Breast epithelium (tissue), 4 donors: ENCODE measurements at regions of chr4 and their contacts with region 1.

Region 1: DNA sequence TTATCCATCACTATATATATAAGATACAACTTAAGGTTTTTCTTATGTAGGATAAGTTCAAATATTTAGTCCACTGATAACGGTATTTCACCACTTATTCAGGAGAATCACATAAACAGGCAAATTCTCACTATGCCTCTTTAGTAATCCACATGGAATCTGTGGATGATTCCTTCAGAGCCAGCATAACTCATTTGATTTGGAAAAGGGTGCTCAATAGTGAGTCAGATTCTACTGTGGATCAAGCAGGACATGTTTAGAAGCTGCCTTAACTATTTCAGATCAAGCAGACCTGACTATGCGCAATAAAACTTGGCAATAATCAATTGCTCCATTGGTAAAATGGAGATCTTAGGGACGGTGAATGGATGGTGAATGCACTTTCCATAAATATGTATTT is 184.1 kb downstream of the CBR4 start:
- DNase-seq: no peak
- H3K4me3 ChIP-seq: no peak overlapping the region
- H3K27ac ChIP-seq: no peak overlapping the region
- H3K4me1 ChIP-seq: no peaks in the 10 kb centered on the region
- H3K27me3 ChIP-seq: no peaks in the 10 kb centered on the region
- CTCF ChIP-seq: no peak
- POLR2A ChIP-seq: no peak

Region 2: DNA sequence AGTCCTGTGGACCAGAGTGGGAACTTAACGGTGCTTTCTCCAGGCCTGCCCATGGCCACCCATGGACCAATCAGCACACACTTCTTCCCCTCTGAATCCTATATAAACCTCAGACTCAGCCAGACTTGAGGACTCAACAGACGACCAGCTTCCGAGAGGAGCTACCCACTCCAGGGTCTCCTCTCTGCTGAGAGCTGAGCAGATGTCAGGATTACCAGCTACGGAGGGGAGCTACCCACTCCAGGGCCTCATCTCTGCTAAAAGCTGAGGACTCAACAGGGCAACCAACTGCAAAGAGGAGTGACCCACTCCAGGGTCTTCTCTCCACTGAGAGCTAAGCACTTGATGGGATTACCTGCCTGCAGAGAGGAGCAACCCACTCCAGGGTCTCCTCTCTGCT is 427.4 kb before region 1 on chr4:
- intact Hi-C with region 1: loop called (anchors 5 kb)
- DNase-seq: no peak
- H3K4me3 ChIP-seq: no peak overlapping the region
- H3K27ac ChIP-seq: no peak overlapping the region
- H3K4me1 ChIP-seq: no peaks in the 10 kb centered on the region
- H3K27me3 ChIP-seq: no peaks in the 10 kb centered on the region
- CTCF ChIP-seq: no peak
- POLR2A ChIP-seq: no peak

Region 3: GRCh38 chr4:168524006-168524405 is 302.0 kb before region 1 on chr4:
- intact Hi-C with region 1: loop called (anchors 5 kb)
- DNase-seq: no peak
- H3K4me3 ChIP-seq: no peak overlapping the region
- H3K27ac ChIP-seq: no peak overlapping the region
- H3K4me1 ChIP-seq: no peaks in the 10 kb centered on the region
- H3K27me3 ChIP-seq: no peaks in the 10 kb centered on the region
- CTCF ChIP-seq: no peak
- POLR2A ChIP-seq: no peak

Region 4: DNA sequence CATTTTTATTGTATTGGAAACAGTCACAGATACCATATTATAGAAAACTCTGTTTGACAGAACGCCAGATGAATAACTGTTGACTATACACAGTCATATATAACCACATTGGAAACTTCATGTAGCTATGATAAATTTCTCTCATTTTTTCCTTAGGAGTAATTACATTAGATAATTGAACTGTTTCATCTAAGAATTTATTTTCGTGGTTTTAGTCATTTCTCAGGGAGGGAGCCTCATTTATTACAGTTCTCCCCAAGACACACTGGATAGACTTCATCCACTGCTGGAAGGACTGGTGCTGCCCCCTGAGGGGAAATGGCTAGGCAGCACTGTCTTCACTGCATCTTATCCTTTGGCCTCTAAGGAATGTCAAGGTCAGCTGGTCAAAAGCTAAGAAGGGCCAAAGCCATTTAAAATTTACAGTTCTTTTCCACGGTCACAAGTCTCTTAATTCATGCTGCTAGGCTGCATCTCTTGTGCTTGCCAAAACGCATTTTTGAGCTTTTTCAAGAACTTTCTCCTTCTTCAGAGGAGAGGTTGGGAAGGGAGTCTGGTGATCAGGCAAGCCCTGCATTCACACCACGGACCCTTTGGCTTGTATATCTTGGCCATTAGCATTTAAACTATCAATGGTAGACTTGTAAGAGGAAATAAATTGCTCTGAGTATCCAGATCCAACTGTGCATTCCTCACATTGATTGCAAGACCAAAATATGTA is 39.0 kb after region 1 on chr4:
- intact Hi-C with region 1: no loop called
- DNase-seq: no peak
- H3K4me3 ChIP-seq: peak overlapping the region in 1 of 3 donors; percentile 9
- H3K27ac ChIP-seq: peak overlapping the region; percentile 2 to 23
- H3K4me1 ChIP-seq: peaks cover 0 to 4% of the 10 kb centered on the region in 2 donors
- H3K27me3 ChIP-seq: no peaks in the 10 kb centered on the region
- CTCF ChIP-seq: no peak
- POLR2A ChIP-seq: no peak